ENCODE measurements at regions of chr6 and their contacts with region 1.

Region 1: DNA sequence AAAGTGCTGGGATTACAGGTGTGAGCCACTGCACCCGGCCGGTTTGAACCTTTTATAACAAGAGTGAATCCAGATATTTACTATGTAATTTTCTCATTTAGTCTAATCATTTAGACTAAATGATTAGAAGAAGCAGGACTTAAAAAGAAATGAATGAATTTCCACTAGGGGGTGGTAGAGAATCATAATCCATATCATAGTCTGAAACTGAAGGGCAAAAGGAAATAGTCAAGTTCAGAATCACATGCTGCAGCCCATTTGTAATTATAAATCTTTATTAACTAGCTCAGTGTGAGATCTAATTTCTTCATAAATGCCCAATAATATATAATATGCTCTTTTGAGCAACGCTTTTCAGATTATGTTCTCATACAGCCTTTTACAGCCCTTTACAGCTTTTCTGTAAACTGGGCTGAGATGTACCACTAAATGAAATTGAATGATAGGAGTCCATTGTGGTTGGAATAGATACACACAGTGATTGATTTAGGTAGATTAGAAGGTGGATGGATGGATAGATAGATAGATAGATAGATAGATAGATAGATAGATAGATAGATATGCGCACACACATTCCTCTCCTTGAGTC is 31.8 kb downstream of the PSMB9 start:
- DNase-seq: no peak

Region 2: GRCh38 chr6:32933636-32934085 is 47.9 kb after region 1 on chr6:
- intact Hi-C with region 1: loop called (anchors 2 kb)
- DNase-seq: peak in 9 of 10 donors; percentile 36 to 91 (median 77)

Region 3: GRCh38 chr6:32947552-32948465 is 62.0 kb after region 1 on chr6:
- intact Hi-C with region 1: no loop called
- DNase-seq: no peak

Region 4: DNA sequence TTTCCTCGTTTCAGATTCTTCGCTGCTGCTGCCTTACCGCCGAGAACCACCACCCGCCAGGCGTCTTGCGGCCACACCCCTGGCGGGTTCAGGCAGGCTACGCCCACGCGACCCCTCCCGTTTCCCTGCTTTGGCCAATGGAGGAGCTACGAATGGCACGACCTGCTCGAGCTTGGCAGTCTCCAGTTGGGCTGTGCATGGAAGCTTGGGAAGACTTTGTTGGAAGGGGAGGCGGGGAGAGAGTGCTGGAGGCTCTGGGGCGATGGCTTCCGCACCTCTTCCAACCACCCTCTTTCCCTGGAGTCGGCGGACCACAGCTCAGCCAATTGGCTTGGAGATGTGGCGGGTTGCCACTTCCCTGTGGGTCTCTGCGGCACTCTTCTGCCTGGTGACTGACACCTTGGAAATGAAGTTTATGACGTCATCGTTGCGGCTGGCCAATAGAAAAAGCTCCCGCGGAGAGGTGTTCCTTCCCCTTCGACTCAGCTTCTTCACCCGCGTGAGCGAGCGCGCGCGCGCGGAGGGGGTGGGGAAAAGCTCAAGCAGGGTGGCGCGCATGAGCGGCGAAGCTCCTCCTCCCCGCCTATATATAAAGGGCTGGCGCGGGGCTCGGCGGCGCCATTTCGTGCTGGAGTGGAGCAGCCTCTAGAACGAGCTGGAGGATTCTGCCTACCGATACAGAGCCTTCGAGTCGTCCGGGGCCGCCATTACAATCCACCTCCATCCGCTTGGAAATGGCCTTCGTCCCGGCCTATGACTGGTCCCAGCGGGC is 86.0 kb after region 1 on chr6:
- intact Hi-C with region 1: loop called (anchors 5 kb)
- DNase-seq: peak; percentile 99 to 100 (median 99)

Region 5: DNA sequence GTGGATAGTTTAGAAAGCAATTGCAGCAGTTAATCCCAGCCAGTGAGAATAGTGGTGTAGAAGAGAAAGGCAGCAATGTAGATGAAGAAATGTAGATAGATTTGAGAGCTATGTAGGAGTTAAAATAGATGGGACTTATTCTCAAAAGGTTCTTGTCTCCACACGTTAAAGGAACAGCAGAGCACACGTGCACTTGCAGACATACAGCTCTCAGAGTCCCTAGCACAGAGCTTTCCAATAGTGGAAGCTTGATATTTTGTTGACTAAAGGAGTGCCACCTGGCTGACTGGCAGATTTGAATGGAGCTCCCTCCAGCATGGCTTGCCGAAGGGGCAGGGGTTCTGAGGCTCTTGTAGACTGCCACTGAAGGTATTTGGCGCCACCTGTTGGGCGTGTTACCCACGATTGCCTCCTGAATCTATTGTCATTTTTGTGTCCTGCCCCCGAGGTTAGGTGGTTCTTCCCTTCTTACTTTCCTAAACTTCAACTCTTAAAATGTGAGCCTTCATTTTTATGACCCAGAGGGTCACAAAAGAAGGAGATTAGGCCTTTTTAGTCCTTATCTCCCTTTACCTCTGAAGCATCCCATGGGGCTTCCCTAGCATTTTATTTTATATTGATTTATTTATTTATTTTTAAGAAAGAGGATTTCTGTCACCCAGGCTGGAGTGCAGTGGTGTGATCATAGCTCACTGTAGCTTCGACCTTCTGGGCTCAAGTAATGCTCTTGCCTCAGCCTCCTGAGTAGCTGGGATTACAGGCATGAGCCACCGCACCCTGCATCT is 99.0 kb after region 1 on chr6:
- intact Hi-C with region 1: loop called (anchors 1 kb)
- DNase-seq: peak; percentile 75 to 97 (median 88)

Region 6: GRCh38 chr6:33126101-33126714 is 240.4 kb after region 1 on chr6:
- intact Hi-C with region 1: no loop called
- DNase-seq: peak in 7 of 10 donors; percentile 32 to 88 (median 64)

Region 7: DNA sequence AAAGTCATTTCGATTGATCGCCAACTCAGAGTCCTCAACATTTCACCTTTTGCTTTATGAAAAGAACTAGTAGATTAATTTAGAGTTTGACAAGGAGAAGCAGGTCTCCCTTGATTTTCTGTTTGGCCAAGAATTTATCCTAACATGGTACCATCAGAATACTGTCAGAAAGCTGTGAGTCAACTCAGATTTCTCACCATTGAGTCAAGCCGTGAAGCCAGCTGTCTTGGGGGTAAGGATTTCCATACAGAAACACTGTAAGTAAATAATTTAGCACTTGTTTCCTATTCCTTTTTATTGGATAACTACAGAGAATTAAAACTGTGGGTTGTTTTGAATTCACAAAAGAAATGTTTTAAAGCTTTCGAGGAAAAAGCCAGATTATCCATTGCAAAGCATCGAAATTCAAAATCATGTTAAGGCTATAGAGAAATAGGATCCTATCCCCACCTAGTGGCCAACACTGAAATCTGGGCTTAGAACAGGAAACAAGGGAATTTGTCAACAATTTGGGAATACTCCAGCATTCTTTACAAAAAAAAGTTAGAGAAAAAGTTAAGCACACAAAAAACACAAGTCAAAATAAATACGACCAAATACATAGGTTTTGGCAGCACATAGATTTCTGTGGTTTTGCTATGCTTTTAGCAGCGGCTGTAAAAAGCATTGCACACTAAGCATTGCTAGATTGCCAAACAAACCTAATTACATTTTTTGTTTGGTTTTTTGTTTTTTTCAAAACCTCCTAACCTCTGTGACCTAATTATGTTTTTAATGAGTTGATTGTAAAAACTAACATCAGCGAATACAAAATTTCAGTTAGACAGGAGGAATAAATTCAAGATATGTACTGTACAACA is 262.2 kb after region 1 on chr6:
- intact Hi-C with region 1: loop called (anchors 10 kb)
- DNase-seq: no peak